Caco-2 (cell line): ENCODE measurements at regions of chr2 and their contacts with region 1.

Region 1: GRCh38 chr2:24075915-24076848 is at the start of gene SF3B6:
- DNase-seq: peak; percentile 100
- H3K4me3 ChIP-seq: peak within 1 kb of the TSS; percentile 72
- H3K4me3 Mint-ChIP-seq: peak within 1 kb of the TSS; percentile 99
- H3K27ac Mint-ChIP-seq: peak within 1 kb of the TSS; percentile 96
- H3K4me1 ChIP-seq: peaks cover 17% of the 10 kb centered on the region
- H3K4me1 Mint-ChIP-seq: peaks cover 22% of the 10 kb centered on the region
- H3K27me3 ChIP-seq: no peaks in the 10 kb centered on the region
- H3K27me3 Mint-ChIP-seq: no peaks in the 10 kb centered on the region
- CTCF ChIP-seq: no peak
- total RNA-seq, gene SF3B6: 183 and 184 TPM in 2 replicates

Region 2: DNA sequence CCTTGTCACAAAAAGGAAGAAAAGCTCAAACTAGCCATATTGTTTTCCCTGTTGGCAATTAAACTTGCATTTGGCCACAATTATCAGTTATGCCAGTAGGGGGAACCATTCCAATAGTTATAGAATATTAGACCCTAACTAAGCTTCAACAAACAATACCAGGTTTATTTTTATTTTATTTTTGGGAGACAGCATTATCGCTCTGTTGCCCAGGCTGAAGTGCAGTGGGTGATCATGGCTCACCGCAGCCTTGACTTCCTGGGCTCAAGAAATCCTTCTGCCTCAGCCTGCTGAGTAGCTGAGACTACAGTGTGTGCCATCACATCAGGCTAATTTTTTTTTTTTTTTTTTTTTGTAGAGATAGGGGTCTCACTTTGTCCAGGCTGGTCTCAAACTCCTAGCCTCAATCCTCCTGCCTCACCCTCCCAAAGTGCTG is 251.4 kb before region 1 on chr2:
- CTCF ChIA-PET with region 1: interaction called, 11 read pairs
- POLR2A ChIA-PET with region 1: no interaction called
- intact Hi-C with region 1: no loop called
- DNase-seq: peak in 1 of 2 experiments; percentile 66
- H3K4me3 ChIP-seq: no peak overlapping the region
- H3K4me3 Mint-ChIP-seq: no peak overlapping the region
- H3K27ac Mint-ChIP-seq: no peak overlapping the region
- H3K4me1 ChIP-seq: no peaks in the 10 kb centered on the region
- H3K4me1 Mint-ChIP-seq: no peaks in the 10 kb centered on the region
- H3K27me3 ChIP-seq: no peaks in the 10 kb centered on the region
- H3K27me3 Mint-ChIP-seq: no peaks in the 10 kb centered on the region
- CTCF ChIP-seq: peak; percentile 72 to 74

Region 3: DNA sequence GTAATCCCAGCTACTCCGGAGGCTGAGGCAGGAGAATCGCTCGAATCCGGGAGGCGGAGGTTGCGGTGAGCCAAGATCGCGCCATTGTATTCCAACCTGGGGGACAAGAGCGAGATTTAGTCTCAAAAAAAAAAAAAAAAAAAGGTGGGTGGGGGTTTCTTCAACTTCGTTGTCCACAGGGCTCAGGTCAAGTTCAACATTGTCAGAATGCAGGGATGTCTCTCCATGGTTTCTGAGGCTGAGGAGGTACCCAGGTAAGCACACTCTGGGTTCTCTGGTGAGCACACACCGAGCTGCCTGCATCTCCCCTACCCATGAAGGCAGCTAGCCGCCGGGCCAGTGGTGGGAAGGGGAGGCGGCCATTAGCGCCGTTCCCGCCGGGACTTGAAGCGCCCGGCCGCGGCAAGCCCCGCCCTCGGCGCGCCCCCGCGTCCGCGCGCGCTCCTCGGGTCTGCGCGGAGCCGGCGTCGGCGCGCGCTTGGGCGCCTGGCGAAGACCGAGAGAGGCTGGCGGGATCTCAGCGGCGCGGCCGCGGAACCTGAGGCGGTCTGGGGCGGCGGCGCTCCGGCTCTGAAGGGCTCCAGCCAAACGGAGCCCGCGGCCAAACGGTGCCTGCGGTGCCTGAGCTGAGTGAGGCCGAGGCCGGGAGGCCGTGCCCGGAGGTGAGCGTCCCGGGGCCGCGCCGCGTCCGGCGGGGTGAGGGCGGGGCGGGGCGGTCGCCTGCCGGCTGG is 136.0 kb before region 1 on chr2 and contains the start of gene UBXN2A:
- CTCF ChIA-PET with region 1: interaction called, 3 read pairs
- POLR2A ChIA-PET with region 1: interaction called, 4 read pairs
- intact Hi-C with region 1: loop called (anchors 1 kb)
- DNase-seq: peak; percentile 75 to 90
- H3K4me3 ChIP-seq: peak within 1 kb of the TSS; percentile 56
- H3K4me3 Mint-ChIP-seq: peak within 1 kb of the TSS; percentile 76
- H3K27ac Mint-ChIP-seq: peak within 1 kb of the TSS; percentile 51
- H3K4me1 ChIP-seq: peaks cover 5% of the 10 kb centered on the region
- H3K4me1 Mint-ChIP-seq: peaks cover 18% of the 10 kb centered on the region
- H3K27me3 ChIP-seq: no peaks in the 10 kb centered on the region
- H3K27me3 Mint-ChIP-seq: no peaks in the 10 kb centered on the region
- CTCF ChIP-seq: no peak
- total RNA-seq, gene UBXN2A: 21.6 and 22.0 TPM in 2 replicates

Region 4: GRCh38 chr2:24046930-24047702 is 29.1 kb before region 1 on chr2 and contains the start of gene WDCP:
- CTCF ChIA-PET with region 1: interaction called, 11 read pairs
- POLR2A ChIA-PET with region 1: interaction called, 47 read pairs
- intact Hi-C with region 1: loop called (anchors 1 kb)
- DNase-seq: peak; percentile 96 to 98
- H3K4me3 ChIP-seq: peak within 1 kb of the TSS; percentile 65
- H3K4me3 Mint-ChIP-seq: peak within 1 kb of the TSS; percentile 86
- H3K27ac Mint-ChIP-seq: peak within 1 kb of the TSS; percentile 30
- H3K4me1 ChIP-seq: peaks cover 4% of the 10 kb centered on the region; the same call in 1 of the 2 replicates
- H3K4me1 Mint-ChIP-seq: peaks cover 7% of the 10 kb centered on the region
- H3K27me3 ChIP-seq: no peaks in the 10 kb centered on the region
- H3K27me3 Mint-ChIP-seq: no peaks in the 10 kb centered on the region
- CTCF ChIP-seq: no peak
- total RNA-seq, gene WDCP: 10.4 and 13.0 TPM in 2 replicates

Region 5: GRCh38 chr2:24111407-24111901 is 35.3 kb after region 1 on chr2:
- CTCF ChIA-PET with region 1: no interaction called
- POLR2A ChIA-PET with region 1: no interaction called
- intact Hi-C with region 1: no loop called
- DNase-seq: peak in 1 of 2 experiments; percentile 13
- H3K4me3 ChIP-seq: no peak overlapping the region
- H3K4me3 Mint-ChIP-seq: no peak overlapping the region
- H3K27ac Mint-ChIP-seq: peak overlapping the region; percentile 73
- H3K4me1 ChIP-seq: peaks cover 21% of the 10 kb centered on the region
- H3K4me1 Mint-ChIP-seq: peaks cover 23% of the 10 kb centered on the region
- H3K27me3 ChIP-seq: no peaks in the 10 kb centered on the region
- H3K27me3 Mint-ChIP-seq: no peaks in the 10 kb centered on the region
- CTCF ChIP-seq: no peak

Region 6: GRCh38 chr2:24164125-24164973 is 88.2 kb after region 1 on chr2:
- CTCF ChIA-PET with region 1: interaction called, 6 read pairs
- POLR2A ChIA-PET with region 1: no interaction called
- intact Hi-C with region 1: loop called (anchors 2 kb)
- DNase-seq: peak; percentile 66 to 84
- H3K4me3 ChIP-seq: no peak overlapping the region
- H3K4me3 Mint-ChIP-seq: no peak overlapping the region
- H3K27ac Mint-ChIP-seq: no peak overlapping the region
- H3K4me1 ChIP-seq: no peaks in the 10 kb centered on the region
- H3K4me1 Mint-ChIP-seq: no peaks in the 10 kb centered on the region
- H3K27me3 ChIP-seq: no peaks in the 10 kb centered on the region; the same call in 1 of the 2 replicates
- H3K27me3 Mint-ChIP-seq: peaks cover 2% of the 10 kb centered on the region
- CTCF ChIP-seq: peak; percentile 93 to 99